ENCODE measurements at regions of chr19 and their contacts with region 1.

Region 1: DNA sequence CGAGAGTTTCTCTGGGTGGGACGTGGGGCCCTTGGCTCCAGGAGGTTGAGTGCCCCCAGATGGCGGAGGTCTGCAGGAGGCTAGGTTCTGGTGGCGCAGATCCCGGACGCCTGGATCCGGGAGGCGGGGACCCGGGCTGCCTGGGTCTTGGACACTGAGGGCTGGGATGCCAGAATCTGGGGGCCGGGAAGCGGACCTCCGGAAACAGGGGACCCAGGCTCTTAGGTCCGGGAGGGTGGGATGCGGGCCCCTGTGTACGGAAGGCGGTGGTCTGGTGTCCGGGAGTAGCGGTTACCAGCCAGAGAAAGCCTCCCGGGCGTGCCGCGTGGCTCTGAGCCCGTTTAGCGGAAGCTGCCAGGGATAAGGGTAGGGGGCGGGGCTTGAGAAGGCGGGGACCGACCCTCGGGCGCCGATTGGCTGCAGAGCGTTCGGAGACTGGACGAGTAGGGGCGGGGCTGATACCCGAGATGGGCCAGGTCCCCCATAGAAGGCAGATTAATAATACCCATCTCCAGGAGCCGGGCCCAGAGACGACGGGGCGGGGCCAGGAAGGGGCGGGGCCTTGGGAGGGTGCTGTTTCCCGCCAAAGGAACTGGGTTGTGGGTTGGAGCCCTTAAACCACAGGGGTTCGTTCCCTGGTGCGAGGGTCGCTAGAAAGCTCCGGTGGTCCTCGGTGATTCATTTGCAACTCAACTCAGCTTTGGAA is at the start of gene SLC1A5:
- DNase-seq: peak; percentile 92
- H3K4me3 ChIP-seq: peak within 1 kb of the TSS; percentile 94
- H3K27ac ChIP-seq: peak within 1 kb of the TSS; percentile 97
- H3K27me3 ChIP-seq: no peaks in the 10 kb centered on the region
- CTCF ChIP-seq: no peak
- polyA plus RNA-seq, gene SLC1A5: 314 and 342 TPM in 2 replicates

Region 2: DNA sequence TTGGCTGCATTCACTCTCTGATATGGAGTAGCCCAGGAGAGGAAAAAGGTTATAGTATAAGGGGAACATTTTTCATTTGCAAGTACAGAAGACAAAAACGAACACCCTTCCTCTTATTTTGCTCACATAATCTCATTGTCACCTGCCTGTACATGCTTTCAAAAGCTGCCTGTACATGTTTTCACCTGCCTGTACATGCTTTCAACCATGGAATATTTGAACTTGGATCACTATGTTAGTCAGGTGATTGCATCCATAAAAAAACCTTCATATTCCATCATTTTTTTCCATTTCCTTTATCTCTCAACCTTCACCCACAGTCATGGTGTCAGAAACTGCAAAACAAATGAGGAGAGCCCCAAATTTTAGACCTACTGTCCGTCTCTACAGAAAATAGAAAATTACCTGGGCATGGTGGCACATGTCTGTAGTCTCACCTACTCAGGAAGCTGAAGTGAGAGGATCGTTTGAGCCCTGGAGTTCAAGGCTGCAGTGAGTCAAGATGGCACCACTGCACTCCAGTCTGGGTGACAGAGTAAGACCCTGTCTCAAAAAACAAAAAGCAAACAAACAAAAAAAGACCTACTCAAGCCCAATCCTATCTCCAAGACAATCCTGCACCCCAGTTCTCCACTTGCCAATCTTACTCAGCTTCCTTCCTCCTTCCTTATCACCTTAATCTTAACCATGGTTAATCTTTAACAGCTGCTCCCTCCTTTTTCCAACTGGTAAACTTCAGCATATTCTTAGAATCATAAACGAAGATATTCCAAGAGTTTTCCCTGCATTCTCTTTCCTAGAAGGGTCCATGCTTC is 628.8 kb before region 1 on chr19:
- CTCF ChIA-PET with region 1: no interaction called
- POLR2A ChIA-PET with region 1: no interaction called
- DNase-seq: no peak
- H3K4me3 ChIP-seq: no peak overlapping the region
- H3K27ac ChIP-seq: no peak overlapping the region
- H3K27me3 ChIP-seq: peaks cover 23% of the 10 kb centered on the region
- CTCF ChIP-seq: no peak

Region 3: GRCh38 chr19:46759817-46760333 is 28.5 kb before region 1 on chr19:
- CTCF ChIA-PET with region 1: interaction called, 5 read pairs
- POLR2A ChIA-PET with region 1: interaction called, 11 read pairs
- DNase-seq: peak; percentile 94
- H3K4me3 ChIP-seq: no peak overlapping the region
- H3K27ac ChIP-seq: peak overlapping the region; percentile 96
- H3K27me3 ChIP-seq: no peaks in the 10 kb centered on the region
- CTCF ChIP-seq: no peak

Region 4: DNA sequence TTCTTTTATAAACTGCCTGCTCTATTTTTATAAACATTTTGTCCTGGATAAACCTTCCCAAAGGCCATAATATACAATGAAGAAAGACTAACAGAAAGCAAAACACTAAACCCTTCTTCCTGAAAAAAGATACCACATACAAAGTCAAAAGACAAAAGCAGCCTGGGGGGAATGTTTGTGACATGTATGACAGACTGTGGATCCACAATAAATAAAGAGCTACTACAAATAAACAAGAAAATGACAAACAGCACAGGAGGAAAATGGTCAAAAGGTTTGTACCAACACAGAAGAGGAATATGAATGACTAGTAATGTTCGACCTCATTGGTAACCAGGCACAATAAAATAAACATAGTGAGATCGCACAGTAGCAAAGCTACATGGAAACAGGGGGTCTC is 42.4 kb after region 1 on chr19:
- CTCF ChIA-PET with region 1: no interaction called
- POLR2A ChIA-PET with region 1: interaction called, 16 read pairs
- DNase-seq: no peak
- H3K4me3 ChIP-seq: no peak overlapping the region
- H3K27ac ChIP-seq: no peak overlapping the region
- H3K27me3 ChIP-seq: no peaks in the 10 kb centered on the region
- CTCF ChIP-seq: no peak